ENCODE measurements at regions of chr1 and their contacts with region 1.

Region 1: GRCh38 chr1:209643285-209644020 is 8.8 kb downstream of the LAMB3 start:
- DNase-seq: no peak
- H3K4me3 ChIP-seq: no peak overlapping the region
- H3K27ac ChIP-seq: peak overlapping the region; percentile 34 to 66
- H3K4me1 ChIP-seq: peaks cover 4 to 9% of the 10 kb centered on the region in 2 donors
- H3K27me3 ChIP-seq: no peaks in the 10 kb centered on the region
- CTCF ChIP-seq: no peak
- POLR2A ChIP-seq: no peak

Region 2: DNA sequence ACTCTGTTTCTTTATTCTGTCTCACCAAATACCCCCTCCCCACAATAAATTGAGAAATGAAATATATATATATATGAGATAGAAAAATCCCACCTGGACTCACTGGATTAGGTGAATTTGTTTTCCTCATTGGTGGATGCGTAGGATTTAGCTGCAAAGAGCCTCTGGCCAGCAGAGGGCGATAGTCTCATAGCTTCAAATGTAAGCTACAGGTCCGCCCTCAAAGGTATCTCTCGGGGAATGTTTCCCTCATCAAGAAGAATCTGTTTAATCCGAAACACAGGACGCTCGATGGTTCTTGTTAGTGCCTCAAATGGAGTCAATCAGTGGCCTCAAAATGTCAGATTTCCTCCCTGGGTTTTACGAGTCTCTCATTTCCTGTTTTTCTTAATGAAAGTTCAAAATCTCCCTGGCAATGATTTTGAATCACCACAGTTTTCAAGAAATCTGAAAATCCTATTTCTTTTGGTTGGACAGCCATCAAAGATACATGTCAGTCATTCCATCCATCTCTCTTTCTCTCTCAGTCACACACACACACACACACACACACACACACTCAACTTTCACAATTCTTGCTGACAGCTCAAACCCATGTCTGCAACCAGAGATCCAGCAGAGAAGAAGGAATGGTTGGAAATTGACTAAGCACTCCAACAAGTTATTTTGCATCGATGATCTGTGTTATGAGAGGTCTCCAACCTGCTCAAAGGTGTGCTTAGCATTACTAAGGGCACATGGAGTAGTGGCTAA is 73.8 kb before region 1 on chr1:
- intact Hi-C with region 1: loop called (anchors 2 kb)
- DNase-seq: peak; percentile 75 to 77
- H3K4me3 ChIP-seq: peak overlapping the region in 1 of 3 donors; percentile 43
- H3K27ac ChIP-seq: no peak overlapping the region
- H3K4me1 ChIP-seq: no peaks in the 10 kb centered on the region
- H3K27me3 ChIP-seq: peaks cover 0 to 3% of the 10 kb centered on the region in 2 donors
- CTCF ChIP-seq: peak; percentile 63 to 75 (median 65)
- POLR2A ChIP-seq: no peak

Region 3: DNA sequence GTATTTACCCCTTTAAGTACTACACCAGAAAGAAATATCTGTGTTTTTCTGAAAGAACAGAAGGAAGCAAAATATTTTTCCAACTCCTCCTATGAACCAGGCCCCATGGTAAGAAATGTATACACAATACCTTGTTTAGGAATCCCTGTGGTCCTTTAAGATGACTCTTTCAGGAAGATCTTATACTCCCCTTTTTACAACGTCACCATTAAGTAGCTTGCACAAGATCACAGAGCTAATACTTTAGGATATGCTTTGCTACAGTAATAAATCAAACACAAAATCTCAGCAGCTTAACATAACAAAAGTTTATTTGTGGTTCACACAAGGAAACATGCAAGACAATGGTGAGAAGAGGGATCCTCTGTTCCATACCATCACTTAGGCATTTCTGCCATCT is 17.6 kb after region 1 on chr1:
- intact Hi-C with region 1: loop called (anchors 1 kb)
- DNase-seq: no peak
- H3K4me3 ChIP-seq: no peak overlapping the region
- H3K27ac ChIP-seq: no peak overlapping the region
- H3K4me1 ChIP-seq: no peaks in the 10 kb centered on the region
- H3K27me3 ChIP-seq: no peaks in the 10 kb centered on the region
- CTCF ChIP-seq: no peak
- POLR2A ChIP-seq: no peak